Head of caudate nucleus (tissue), 42 donors: ENCODE measurements at regions of chr5 and their contacts with region 1.

Region 1: DNA sequence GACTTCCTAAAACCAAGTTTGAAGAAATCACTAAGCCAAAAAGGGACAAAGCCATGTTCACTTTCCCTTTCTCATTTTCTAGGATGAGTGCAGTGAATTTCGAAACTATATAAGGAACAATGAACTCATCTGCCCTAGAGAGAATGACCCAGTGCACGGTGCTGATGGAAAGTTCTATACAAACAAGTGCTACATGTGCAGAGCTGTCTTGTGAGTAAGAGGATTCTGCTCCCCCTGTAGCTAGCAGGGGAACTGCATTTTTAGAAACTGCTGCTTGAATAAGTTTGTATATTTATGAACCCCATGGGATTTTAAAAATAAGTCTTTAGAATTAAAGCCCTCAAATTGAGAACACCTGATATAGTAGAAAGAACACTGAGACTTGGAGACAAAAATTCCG is 42.7 kb upstream of the SPINK14 start:
- DNase-seq: no peak

Region 2: DNA sequence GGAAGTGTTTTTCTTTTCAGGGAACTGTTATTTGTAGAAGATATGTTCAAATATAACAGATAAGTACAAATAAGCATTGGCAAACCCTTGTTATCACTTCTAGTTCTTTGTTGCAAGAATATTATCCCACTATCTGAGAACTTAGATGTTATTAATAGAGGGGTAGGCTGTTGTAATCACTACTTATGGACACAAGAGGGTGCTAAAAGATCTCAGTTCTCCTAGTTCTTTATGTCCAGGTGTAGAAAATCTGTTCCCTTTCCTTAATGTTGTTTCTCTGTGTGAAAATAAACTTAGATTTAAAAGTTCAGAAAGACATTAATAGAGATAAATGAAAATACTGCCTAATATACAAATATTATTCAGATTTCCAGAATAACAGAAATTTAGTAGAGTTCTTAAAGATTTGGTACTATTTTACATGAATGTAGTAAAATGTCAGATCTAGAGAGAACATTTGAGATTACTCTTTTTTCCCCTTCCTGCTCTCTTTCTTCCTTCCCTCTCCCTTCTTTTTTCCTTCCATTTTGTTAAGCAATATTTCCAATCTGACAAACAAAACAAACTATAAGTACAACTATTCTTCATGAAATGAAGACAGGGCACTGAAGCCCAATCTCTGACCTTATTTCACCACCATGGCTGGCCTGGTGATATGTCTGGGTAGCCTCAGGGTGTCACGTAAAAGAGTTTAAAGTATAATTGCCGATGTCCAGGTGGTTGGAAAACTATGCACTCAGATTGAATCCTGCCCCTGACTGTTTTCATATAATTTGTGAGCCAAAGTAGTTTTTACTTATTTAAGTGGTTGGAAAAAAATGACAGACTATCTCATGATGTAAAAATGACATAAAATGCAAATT is 175.7 kb before region 1 on chr5:
- intact Hi-C with region 1: loop called (anchors 10 kb)
- DNase-seq: peak in 1 of 42 donors; percentile 24

Region 3: DNA sequence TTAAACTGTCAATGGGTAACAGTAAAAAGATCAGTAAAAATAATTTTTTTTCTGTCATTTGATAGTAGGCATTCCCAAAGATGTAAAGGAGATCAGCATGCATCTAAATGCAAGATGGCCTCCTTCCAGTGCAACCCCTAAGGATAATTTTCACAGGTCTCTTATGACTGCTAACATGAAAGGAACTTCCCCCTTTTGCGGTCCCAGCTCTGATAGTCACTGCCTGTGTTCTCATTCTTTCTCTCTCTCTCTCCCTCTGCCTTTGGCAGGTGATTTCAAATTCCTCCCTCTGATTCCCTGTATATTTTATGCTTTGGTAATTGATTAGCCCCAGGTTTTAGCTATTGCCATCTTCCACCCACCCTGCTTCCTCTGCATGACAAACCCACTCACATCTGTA is 51.6 kb after region 1 on chr5:
- intact Hi-C with region 1: no loop called
- DNase-seq: no peak